ENCODE measurements at regions of chr11 and their contacts with region 1.

Region 1: GRCh38 chr11:33633241-33633901 is 67.3 kb downstream of the C11orf91 start:
- DNase-seq: peak; percentile 85 to 99
- H3K4me3 ChIP-seq: peak overlapping the region; percentile 4; the same call in 1 of the 2 replicates
- H3K27ac ChIP-seq: peak overlapping the region; percentile 99
- H3K4me1 ChIP-seq: peaks cover 49% of the 10 kb centered on the region
- H3K27me3 ChIP-seq: no peaks in the 10 kb centered on the region
- CTCF ChIP-seq: no peak

Region 2: DNA sequence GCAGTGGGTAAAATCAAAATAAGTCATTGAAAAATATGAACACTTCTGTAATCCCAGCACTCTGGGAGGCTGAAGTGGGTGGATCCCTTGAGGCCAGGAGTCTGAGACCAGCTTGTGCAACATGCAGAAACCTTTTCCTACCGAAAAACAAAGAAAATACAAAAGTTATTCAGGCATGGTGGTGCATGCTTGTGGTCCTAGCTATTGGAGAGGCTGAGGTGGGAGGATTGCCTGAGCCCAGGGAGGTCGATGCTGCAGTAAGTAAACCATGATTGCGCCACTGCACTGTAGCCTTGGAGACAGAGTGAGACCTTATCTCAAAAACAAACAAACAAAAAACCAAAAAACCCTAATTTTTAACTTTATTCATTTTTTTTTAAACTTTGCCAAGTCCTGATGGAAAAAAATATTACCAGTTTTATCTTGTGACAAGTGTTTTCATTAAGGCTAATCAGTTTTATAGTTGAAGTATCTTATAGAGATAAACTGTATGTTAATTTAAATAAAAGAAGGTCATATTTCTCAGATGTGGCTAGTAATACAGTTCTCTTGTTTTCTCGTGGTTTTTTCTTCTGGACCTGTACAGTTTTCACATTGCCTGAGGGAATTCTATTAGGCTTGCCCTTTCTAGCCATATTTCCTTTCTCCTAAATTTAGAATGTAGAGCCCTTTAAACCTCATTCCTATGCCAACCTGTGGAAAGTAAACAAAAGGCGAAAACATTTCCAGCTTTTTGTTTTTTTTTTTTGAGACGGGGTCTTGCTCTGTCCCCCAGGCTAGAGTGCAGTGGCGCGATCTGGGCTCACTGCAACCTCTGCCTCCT is 366.8 kb before region 1 on chr11:
- CTCF ChIA-PET with region 1: no interaction called
- POLR2A ChIA-PET with region 1: interaction called, 26 read pairs
- intact Hi-C with region 1: no loop called
- DNase-seq: peak; percentile 31 to 66
- H3K4me3 ChIP-seq: no peak overlapping the region
- H3K27ac ChIP-seq: peak overlapping the region; percentile 25; the same call in 1 of the 2 replicates
- H3K4me1 ChIP-seq: peaks cover 56% of the 10 kb centered on the region
- H3K27me3 ChIP-seq: no peaks in the 10 kb centered on the region
- CTCF ChIP-seq: no peak

Region 3: GRCh38 chr11:33373636-33374035 is 259.7 kb before region 1 on chr11:
- CTCF ChIA-PET with region 1: no interaction called
- POLR2A ChIA-PET with region 1: no interaction called
- intact Hi-C with region 1: loop called (anchors 5 kb)
- DNase-seq: no peak
- H3K4me3 ChIP-seq: no peak overlapping the region
- H3K27ac ChIP-seq: 0 out of 2 replicates have a peak overlapping the region, but pooled peaks have one; percentile 81
- H3K4me1 ChIP-seq: peaks cover 54% of the 10 kb centered on the region
- H3K27me3 ChIP-seq: no peaks in the 10 kb centered on the region
- CTCF ChIP-seq: no peak

Region 4: GRCh38 chr11:33557201-33557600 is 76.2 kb before region 1 on chr11:
- CTCF ChIA-PET with region 1: no interaction called
- POLR2A ChIA-PET with region 1: interaction called, 3 read pairs
- intact Hi-C with region 1: loop called (anchors 1 kb)
- DNase-seq: peak; percentile 67 to 97
- H3K4me3 ChIP-seq: no peak overlapping the region
- H3K27ac ChIP-seq: peak overlapping the region; percentile 94
- H3K4me1 ChIP-seq: peaks cover 30% of the 10 kb centered on the region
- H3K27me3 ChIP-seq: no peaks in the 10 kb centered on the region
- CTCF ChIP-seq: no peak

Measured in PC-9 (cell line).